Prostate gland (tissue), 2 donors: ENCODE measurements at regions of chr5 and their contacts with region 1.

Region 1: DNA sequence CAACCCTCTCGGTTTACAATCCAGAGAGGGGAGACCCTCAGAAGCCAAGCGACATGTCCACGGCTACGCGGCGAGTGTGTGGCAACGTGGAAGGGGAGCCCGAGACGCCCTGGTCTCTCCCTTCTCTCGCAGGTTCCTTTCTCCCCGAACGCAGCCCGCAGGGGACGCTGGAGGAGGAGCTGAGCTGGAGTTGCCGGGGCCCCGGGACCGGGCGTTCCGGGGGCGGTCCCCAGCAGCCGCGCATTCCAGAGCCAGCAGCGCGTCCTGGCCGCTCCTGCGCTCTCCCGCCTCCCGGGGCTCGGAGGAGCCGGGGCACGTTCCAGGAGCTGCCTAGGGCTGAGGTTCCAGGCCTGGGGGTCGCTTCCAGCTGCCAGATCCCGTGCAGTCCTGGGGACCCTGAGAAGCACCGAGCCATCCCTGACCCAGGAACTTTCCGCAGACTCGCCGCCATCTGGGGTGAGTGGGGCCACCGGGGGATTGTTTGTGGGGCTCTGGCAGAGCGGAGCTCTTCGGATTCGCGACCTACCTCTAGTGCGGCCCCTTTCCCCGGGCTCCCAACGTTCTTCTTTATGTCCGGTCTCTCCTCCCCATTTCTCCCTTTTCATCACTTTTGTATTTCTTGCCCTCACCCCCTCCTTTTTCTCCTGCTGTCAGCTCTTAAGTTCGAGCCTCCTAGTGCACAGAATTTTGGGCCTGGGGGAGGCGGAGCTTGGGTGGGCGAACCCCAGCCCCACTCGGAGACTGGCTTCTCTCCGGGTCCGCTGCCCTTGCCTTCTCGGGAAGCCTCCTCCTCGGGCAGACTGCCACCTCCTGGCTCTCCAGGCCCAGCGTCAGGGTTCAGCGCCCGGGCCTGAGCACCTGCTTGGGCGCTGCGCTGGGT is at the start of gene SMIM3:
- DNase-seq: peak; percentile 73
- H3K4me3 ChIP-seq: peak within 1 kb of the TSS; percentile 66 to 68
- H3K27ac ChIP-seq: peak within 1 kb of the TSS; percentile 86 to 88
- H3K4me1 ChIP-seq: peaks cover 10% of the 10 kb centered on the region
- H3K27me3 ChIP-seq: no peaks in the 10 kb centered on the region
- CTCF ChIP-seq: peak in 3 of 4 experiments; percentile 23 to 52 (median 43)
- POLR2A ChIP-seq: peak; percentile 72
- total RNA-seq, gene SMIM3: 21.2 to 26.5 TPM

Region 2: DNA sequence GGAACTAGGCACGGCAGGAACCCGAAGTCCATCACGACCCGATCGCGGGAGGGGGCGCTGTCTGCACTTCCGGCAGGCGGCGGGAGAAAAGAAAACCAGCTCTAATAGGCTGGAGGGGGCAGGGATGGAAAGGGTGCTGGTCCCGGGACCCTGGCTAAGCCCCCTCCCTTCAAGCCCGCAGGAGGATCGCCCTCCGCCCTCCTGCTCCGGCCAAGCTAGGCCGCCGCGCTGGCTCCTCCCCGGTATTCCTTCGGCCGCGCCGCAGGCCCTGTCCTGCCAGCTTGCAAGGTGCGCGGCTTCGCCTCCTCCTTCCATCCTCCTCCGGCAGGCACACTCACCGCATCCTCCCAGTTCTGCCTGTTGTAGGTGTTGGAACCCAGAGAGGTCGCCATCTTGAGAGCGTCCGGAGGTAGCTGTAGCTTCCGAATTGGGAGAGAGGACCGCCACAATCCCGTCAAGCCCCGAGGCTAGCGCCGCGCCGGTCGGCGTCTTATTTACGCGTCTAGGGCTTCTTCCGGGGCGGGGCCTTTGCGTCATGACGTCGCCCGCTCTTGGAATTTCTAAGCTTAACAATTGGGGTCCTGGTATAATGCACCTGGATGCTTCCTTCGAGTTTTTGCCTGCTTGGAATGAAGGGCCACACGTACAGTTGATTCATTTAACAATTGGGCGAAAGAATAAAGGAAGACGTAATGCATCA is 78.0 kb before region 1 on chr5 and contains the start of gene RBM22:
- intact Hi-C with region 1: loop called (anchors 2 kb)
- DNase-seq: peak; percentile 91
- H3K4me3 ChIP-seq: peak within 1 kb of the TSS; percentile 96 to 97
- H3K27ac ChIP-seq: peak within 1 kb of the TSS; percentile 96 to 97
- H3K4me1 ChIP-seq: peaks cover 2% of the 10 kb centered on the region
- H3K27me3 ChIP-seq: no peaks in the 10 kb centered on the region
- CTCF ChIP-seq: peak; percentile 31 to 69 (median 60)
- POLR2A ChIP-seq: peak; percentile 73
- total RNA-seq, gene RBM22: 33.6 to 40.3 TPM

Region 3: GRCh38 chr5:150758531-150759333 is 20.0 kb before region 1 on chr5 and contains the start of gene DCTN4:
- intact Hi-C with region 1: loop called (anchors 2 kb)
- DNase-seq: peak; percentile 98
- H3K4me3 ChIP-seq: peak within 1 kb of the TSS; percentile 63 to 76
- H3K27ac ChIP-seq: peak within 1 kb of the TSS; percentile 98
- H3K4me1 ChIP-seq: peaks cover 10% of the 10 kb centered on the region
- H3K27me3 ChIP-seq: no peaks in the 10 kb centered on the region
- CTCF ChIP-seq: peak in 2 of 4 experiments; percentile 23 to 33
- POLR2A ChIP-seq: peak; percentile 51
- total RNA-seq, gene DCTN4: 68.4 to 87.1 TPM